Activated naive CD4-positive, alpha-beta T cell treated with anti-CD3 and anti-CD28 coated beads for 36 hours (primary cell): ENCODE measurements at regions of chr6 and their contacts with region 1.

Region 1: GRCh38 chr6:15691250-15691869 is 28.5 kb upstream of the DTNBP1 start:
- DNase-seq: peak; percentile 87
- H3K4me3 Mint-ChIP-seq: no peak overlapping the region
- H3K27ac Mint-ChIP-seq: no peak overlapping the region
- H3K4me1 Mint-ChIP-seq: peaks cover 7% of the 10 kb centered on the region
- H3K27me3 Mint-ChIP-seq: peaks cover 5% of the 10 kb centered on the region

Region 2: DNA sequence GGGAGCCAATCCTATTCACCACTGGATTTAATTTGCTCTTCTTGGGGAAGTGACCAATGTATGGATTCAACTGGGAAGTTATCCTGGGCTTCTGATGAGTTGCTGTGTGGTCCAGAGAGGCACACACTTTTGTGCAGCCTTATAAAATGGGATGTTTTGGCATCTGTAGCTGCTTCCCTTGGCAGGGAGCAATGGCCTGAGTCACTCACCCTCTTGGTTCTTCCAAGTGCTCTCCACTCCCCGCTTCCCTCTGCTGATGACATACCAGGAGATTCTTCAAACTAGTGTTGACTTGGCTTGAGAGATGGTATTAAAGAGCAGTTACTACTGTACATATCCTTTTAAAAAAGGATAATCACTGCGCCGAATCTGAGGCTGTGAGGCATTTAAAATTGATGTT is 339.7 kb before region 1 on chr6:
- CTCF ChIA-PET with region 1: no interaction called
- intact Hi-C with region 1: no loop called
- DNase-seq: no peak
- H3K4me3 Mint-ChIP-seq: no peak overlapping the region
- H3K27ac Mint-ChIP-seq: no peak overlapping the region
- H3K4me1 Mint-ChIP-seq: peaks cover 76% of the 10 kb centered on the region
- H3K27me3 Mint-ChIP-seq: no peaks in the 10 kb centered on the region

Region 3: DNA sequence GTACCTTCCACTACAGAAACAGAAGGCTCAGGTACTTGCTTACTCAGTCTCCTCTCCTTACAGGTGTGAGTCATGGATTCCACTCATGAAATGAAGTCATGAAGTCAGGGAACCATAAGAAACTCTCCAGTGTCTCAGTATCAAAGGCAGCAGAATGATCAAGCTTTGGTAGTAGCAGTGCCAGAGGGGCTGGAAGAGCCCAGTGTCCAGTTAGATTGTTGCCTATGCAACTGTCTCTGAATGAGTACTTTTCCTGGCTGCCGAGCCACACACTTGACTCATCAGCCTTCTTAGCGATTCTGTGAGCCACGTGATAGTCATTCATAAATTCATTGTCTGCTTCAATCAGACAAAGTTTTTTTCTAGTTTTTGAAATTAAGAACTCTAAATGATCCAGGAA is 23.7 kb after region 1 on chr6:
- CTCF ChIA-PET with region 1: no interaction called
- intact Hi-C with region 1: loop called (anchors 1 kb)
- DNase-seq: peak; percentile 68
- H3K4me3 Mint-ChIP-seq: no peak overlapping the region
- H3K27ac Mint-ChIP-seq: peak overlapping the region; percentile 39
- H3K4me1 Mint-ChIP-seq: peaks cover 22% of the 10 kb centered on the region
- H3K27me3 Mint-ChIP-seq: peaks cover 2% of the 10 kb centered on the region

Region 4: GRCh38 chr6:15879382-15880261 is 188.3 kb after region 1 on chr6:
- CTCF ChIA-PET with region 1: interaction called, 8 read pairs
- intact Hi-C with region 1: loop called (anchors 2 kb)
- DNase-seq: peak; percentile 84
- H3K4me3 Mint-ChIP-seq: peak overlapping the region; percentile 29
- H3K27ac Mint-ChIP-seq: peak overlapping the region; percentile 80
- H3K4me1 Mint-ChIP-seq: peaks cover 26% of the 10 kb centered on the region
- H3K27me3 Mint-ChIP-seq: no peaks in the 10 kb centered on the region

Region 5: GRCh38 chr6:16183187-16183664 is 491.9 kb after region 1 on chr6:
- CTCF ChIA-PET with region 1: interaction called, 30 read pairs
- intact Hi-C with region 1: loop called (anchors 1 kb)
- DNase-seq: no peak
- H3K4me3 Mint-ChIP-seq: no peak overlapping the region
- H3K27ac Mint-ChIP-seq: no peak overlapping the region
- H3K4me1 Mint-ChIP-seq: peaks cover 20% of the 10 kb centered on the region
- H3K27me3 Mint-ChIP-seq: no peaks in the 10 kb centered on the region

Region 6: GRCh38 chr6:16206595-16207037 is 515.3 kb after region 1 on chr6:
- CTCF ChIA-PET with region 1: interaction called, 15 read pairs
- intact Hi-C with region 1: loop called (anchors 1 kb)
- DNase-seq: peak; percentile 61
- H3K4me3 Mint-ChIP-seq: no peak overlapping the region
- H3K27ac Mint-ChIP-seq: no peak overlapping the region
- H3K4me1 Mint-ChIP-seq: no peaks in the 10 kb centered on the region
- H3K27me3 Mint-ChIP-seq: peaks cover 3% of the 10 kb centered on the region